ENCODE measurements at regions of chr16 and their contacts with region 1.

Region 1: DNA sequence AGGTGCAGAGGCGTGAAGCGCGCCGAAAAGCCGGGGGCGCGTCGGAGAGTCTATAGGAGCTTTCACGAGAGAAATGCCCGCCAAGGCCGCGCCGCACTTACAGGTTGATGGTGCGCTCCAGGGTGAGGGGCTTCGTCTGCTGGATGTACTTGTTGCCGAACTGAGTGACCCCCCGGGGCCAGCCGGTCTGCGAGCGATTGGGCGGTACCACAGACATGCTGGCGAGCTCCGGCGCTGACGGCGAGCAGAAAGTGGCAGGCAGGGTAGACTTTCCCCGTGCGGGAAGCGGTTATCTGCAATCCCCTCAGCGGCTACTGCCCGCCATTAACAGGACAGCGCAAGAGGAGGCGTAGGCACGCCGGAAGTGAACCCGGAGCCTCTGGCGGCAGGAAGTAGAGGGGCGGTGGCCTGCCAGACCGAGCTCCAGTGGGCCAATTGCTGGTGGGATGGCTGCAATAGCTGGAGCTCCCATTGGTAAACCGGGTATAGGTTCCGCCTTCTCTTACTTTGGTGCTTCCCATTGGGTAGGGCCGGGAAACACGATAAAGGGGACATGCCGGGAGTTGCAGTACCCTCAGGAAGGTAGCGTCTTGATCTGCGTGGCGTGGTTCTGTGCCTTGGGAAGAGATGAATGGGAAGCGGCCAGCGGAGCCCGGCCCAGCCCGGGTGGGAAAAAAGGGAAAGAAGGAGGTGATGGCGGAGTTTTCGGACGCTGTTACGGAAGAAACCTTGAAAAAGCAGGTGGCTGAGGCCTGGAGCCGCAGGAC is at the starts of genes NUDT21 and OGFOD1:
- DNase-seq: peak; percentile 95
- ATAC-seq: peak; percentile 99
- H3K4me3 ChIP-seq: peak within 1 kb of the TSS; percentile 68 to 88 (median 85)
- H3K4me3 Mint-ChIP-seq: peak within 1 kb of the TSS; percentile 93
- H3K27ac ChIP-seq: peak within 1 kb of the TSS; percentile 53 to 71
- H3K27ac Mint-ChIP-seq: peak within 1 kb of the TSS; percentile 90
- H3K4me1 ChIP-seq: peaks cover 24 to 28% of the 10 kb centered on the region in 2 donors
- H3K4me1 Mint-ChIP-seq: peaks cover 38% of the 10 kb centered on the region
- H3K27me3 ChIP-seq: no peaks in the 10 kb centered on the region
- H3K27me3 Mint-ChIP-seq: no peaks in the 10 kb centered on the region
- CTCF ChIP-seq: no peak
- total RNA-seq, gene NUDT21: 85.5 and 89.4 TPM in 2 replicates
- total RNA-seq, gene OGFOD1: 28.7 and 30.9 TPM in 2 replicates

Region 2: GRCh38 chr16:56401482-56401881 is 49.7 kb before region 1 on chr16:
- CTCF ChIA-PET with region 1: interaction called, 3 read pairs
- POLR2A ChIA-PET with region 1: no interaction called
- intact Hi-C with region 1: loop called (anchors 10 kb)
- DNase-seq: peak; percentile 13
- ATAC-seq: peak; percentile 54
- H3K4me3 ChIP-seq: no peak overlapping the region
- H3K4me3 Mint-ChIP-seq: no peak overlapping the region
- H3K27ac ChIP-seq: no peak overlapping the region
- H3K27ac Mint-ChIP-seq: no peak overlapping the region
- H3K4me1 ChIP-seq: no peaks in the 10 kb centered on the region
- H3K4me1 Mint-ChIP-seq: peaks cover 5% of the 10 kb centered on the region
- H3K27me3 ChIP-seq: no peaks in the 10 kb centered on the region
- H3K27me3 Mint-ChIP-seq: no peaks in the 10 kb centered on the region
- CTCF ChIP-seq: peak; percentile 28

Region 3: DNA sequence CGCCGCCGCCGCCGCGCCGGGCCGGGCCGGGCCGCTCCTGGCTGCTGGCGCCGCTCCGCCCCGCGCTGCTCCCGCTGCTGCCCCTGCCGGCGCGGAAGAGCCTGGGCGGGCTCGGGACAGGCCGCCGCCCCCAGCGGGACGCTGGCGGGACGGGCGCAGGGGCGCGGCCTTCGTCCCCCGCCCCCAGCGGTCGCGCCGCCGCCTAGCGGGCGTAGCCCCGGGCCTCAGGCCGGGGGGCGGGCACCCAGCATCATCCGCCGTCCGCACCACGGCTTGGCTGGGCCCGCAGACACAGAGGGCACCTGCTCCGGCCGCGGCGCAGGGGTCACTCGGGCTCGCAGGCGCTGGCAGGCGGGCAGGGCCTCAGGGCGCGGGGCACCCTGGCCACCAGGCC is 25.7 kb before region 1 on chr16 and contains the start of gene AMFR:
- CTCF ChIA-PET with region 1: interaction called, 6 read pairs
- POLR2A ChIA-PET with region 1: interaction called, 3 read pairs
- intact Hi-C with region 1: loop called (anchors 1 kb)
- DNase-seq: peak; percentile 90
- ATAC-seq: peak; percentile 88
- H3K4me3 ChIP-seq: peak within 1 kb of the TSS; percentile 69 to 78 (median 70)
- H3K4me3 Mint-ChIP-seq: peak within 1 kb of the TSS; percentile 98
- H3K27ac ChIP-seq: peak within 1 kb of the TSS; percentile 72 to 81
- H3K27ac Mint-ChIP-seq: peak within 1 kb of the TSS; percentile 97
- H3K4me1 ChIP-seq: peaks cover 32 to 36% of the 10 kb centered on the region in 2 donors
- H3K4me1 Mint-ChIP-seq: peaks cover 34% of the 10 kb centered on the region
- H3K27me3 ChIP-seq: no peaks in the 10 kb centered on the region
- H3K27me3 Mint-ChIP-seq: no peaks in the 10 kb centered on the region
- CTCF ChIP-seq: peak; percentile 62
- total RNA-seq, gene AMFR: 225 and 234 TPM in 2 replicates

Region 4: GRCh38 chr16:56519459-56520250 is 68.5 kb after region 1 on chr16 and contains the start of gene BBS2:
- CTCF ChIA-PET with region 1: no interaction called
- POLR2A ChIA-PET with region 1: no interaction called
- intact Hi-C with region 1: loop called (anchors 1 kb)
- DNase-seq: peak; percentile 94
- ATAC-seq: peak; percentile 90
- H3K4me3 ChIP-seq: peak within 1 kb of the TSS; percentile 64 to 97 (median 92)
- H3K4me3 Mint-ChIP-seq: peak within 1 kb of the TSS; percentile 90
- H3K27ac ChIP-seq: peak within 1 kb of the TSS; percentile 58 to 80
- H3K27ac Mint-ChIP-seq: peak within 1 kb of the TSS; percentile 89
- H3K4me1 ChIP-seq: peaks cover 9 to 18% of the 10 kb centered on the region in 2 donors
- H3K4me1 Mint-ChIP-seq: peaks cover 38% of the 10 kb centered on the region
- H3K27me3 ChIP-seq: no peaks in the 10 kb centered on the region
- H3K27me3 Mint-ChIP-seq: no peaks in the 10 kb centered on the region
- CTCF ChIP-seq: no peak
- total RNA-seq, gene BBS2: 63.4 and 69.6 TPM in 2 replicates

Region 5: DNA sequence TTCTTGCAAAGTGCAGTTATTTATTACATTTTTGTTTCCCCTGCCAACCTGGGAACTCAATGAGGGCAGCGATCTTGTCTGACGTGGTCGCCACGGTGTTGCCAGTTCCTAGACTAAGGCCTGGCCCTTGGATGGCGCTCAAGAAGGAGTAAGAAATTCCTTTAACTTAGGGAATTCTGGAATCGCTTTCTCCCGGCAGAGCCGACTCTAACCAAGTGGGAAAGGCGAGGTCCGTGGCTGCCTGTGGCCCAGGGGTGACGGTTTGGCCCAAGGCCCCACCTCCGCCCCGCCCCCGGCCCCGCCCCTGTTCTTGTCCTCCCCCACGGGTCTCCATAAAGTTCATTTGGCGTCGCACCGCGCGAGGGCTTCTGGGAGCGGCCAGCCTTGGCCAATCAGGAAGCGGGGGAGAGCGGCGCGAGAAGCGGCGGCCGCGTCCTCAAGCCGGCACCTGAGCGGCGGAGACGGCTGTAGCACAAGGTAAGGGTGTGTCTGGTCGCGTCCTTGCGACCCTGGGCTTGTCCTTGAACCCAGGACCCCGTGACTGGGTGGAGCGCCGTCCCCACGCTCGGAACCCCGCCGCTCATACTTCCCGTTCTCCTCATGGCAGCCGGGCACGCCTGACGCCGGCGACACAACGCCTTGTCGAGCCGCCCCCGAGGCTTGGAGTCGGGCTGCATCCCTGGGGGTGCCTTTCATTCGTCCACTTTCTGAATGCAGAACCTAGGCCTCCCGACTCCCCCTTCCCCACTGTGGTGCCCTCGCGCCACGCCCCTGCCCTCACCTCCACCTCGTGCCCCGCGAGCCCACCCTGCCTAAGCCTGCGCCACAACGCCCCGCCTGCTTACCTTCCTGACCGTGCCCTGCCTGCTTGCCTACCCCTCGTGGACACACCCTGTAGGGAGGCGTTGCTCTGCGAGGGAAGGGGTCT is 278.8 kb after region 1 on chr16 and contains the start of gene NUP93:
- CTCF ChIA-PET with region 1: no interaction called
- POLR2A ChIA-PET with region 1: no interaction called
- intact Hi-C with region 1: loop called (anchors 1 kb)
- DNase-seq: peak; percentile 93
- ATAC-seq: peak; percentile 97
- H3K4me3 ChIP-seq: peak within 1 kb of the TSS; percentile 76 to 92 (median 88)
- H3K4me3 Mint-ChIP-seq: peak within 1 kb of the TSS; percentile 93
- H3K27ac ChIP-seq: peak within 1 kb of the TSS; percentile 64 to 85
- H3K27ac Mint-ChIP-seq: peak within 1 kb of the TSS; percentile 80
- H3K4me1 ChIP-seq: peaks cover 32 to 38% of the 10 kb centered on the region in 2 donors
- H3K4me1 Mint-ChIP-seq: peaks cover 25% of the 10 kb centered on the region
- H3K27me3 ChIP-seq: no peaks in the 10 kb centered on the region
- H3K27me3 Mint-ChIP-seq: no peaks in the 10 kb centered on the region
- CTCF ChIP-seq: no peak
- total RNA-seq, gene NUP93: 64.6 and 67.1 TPM in 2 replicates